PC-3 (cell line): ENCODE measurements at regions of chr10 and their contacts with region 1.

Region 1: DNA sequence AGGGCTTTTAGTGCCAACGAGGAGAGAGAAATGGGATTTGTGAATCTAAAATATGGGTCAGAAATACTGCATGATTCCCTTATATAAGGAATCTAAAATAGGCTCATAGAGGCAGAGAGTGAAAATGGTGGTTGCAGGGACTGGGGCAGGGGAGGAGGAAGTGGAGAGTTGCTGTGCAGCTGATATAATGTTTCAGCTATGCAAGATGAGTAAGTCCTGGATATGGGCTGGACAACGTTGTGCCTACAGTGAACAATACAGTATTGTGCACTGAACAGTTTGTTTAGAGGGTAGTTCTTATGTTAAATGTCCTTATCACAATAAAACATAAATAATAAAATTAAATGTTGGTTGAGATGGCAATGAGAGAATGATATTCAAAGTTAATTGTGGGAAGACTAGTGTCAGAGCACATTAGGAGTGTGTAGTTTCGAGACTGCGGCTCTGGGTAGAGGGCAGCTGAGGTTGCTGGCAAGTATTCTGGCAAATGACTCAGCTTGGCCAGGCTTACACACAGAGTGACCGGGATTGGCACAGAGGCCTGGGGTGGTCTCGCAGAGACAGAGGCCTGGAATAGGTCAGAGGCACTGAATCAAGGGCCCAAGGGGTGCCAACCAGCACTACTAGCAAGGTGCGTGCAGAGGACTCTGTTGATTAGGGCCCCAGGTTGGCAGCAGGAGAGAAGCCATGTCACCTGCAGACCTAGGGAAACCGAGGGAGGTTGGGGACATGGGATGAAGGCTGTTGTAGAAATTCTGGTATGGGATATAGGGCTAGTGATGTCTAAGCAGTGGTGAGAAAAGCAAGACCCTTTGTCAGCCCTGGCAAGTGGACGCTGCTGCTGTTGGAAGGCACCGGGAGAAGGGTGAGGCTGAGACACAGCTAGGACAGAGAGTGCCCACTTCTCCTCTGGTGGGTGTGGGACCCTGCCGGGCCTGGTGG is 2.8 kb upstream of the DEPP1 start:
- DNase-seq: peak; percentile 92
- ATAC-seq: peak; percentile 77
- H3K4me3 ChIP-seq: peak overlapping the region; percentile 16; the same call in 1 of the 2 replicates
- H3K27ac ChIP-seq: peak overlapping the region; percentile 98
- H3K4me1 ChIP-seq: peaks cover 57% of the 10 kb centered on the region
- H3K27me3 ChIP-seq: no peaks in the 10 kb centered on the region
- CTCF ChIP-seq: peak; percentile 27; the same call in 1 of the 2 replicates

Region 2: DNA sequence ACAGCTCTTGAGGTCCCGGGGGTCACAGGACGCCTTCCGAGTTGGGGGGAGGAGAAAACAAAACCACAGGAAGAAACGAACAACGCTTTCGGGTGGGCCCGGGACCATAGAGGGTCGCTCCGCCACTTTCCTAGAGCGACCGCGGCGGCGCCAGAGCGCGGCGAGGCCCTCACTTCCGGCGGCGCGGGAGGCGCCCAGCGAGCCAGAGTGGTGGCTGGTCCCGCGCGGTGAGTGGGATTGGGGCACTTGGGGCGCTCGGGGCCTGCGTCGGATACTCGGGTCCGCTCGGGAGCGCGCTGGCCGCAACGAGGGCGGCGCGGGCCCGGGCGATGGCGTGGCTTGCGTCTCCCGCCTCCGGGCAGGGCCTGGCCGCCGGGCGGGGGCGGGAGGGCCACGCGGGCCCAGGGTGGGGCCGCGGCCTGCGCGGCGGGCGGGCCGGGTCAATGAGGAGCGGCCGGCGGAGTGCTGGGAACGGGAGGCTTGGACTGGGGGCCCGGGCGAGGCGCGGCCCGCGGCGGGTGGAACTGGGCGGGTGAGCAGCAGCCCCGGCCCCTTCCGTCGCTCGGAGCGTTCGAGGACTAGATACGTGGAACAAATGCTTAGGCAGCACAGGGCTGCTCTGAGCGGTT is 19.4 kb after region 1 on chr10 and contains the start of gene ZNF22:
- CTCF ChIA-PET with region 1: interaction called, 8 read pairs
- POLR2A ChIA-PET with region 1: interaction called, 7 read pairs
- intact Hi-C with region 1: loop called (anchors 1 kb)
- DNase-seq: peak; percentile 57
- ATAC-seq: peak; percentile 75
- H3K4me3 ChIP-seq: peak within 1 kb of the TSS; percentile 65
- H3K27ac ChIP-seq: peak within 1 kb of the TSS; percentile 73
- H3K4me1 ChIP-seq: peaks cover 19% of the 10 kb centered on the region
- H3K27me3 ChIP-seq: no peaks in the 10 kb centered on the region
- CTCF ChIP-seq: no peak
- total RNA-seq, gene ZNF22: 17.6 and 24.8 TPM in 2 replicates